Activated CD8-positive, alpha-beta T cell treated with anti-CD3 and anti-CD28 coated beads, Interleukin-2, amount 10 ng/mL, durations not matched to agents 7 days and 5 days (primary cell): ENCODE measurements at regions of chr19 and their contacts with region 1.

Region 1: GRCh38 chr19:11435058-11435832 is at the starts of genes ODAD3 and PRKCSH:
- DNase-seq: peak; percentile 100
- ATAC-seq: peak; percentile 96
- H3K4me3 Mint-ChIP-seq: peak within 1 kb of the TSS; percentile 100
- H3K27ac Mint-ChIP-seq: peak within 1 kb of the TSS; percentile 100
- H3K4me1 Mint-ChIP-seq: peaks cover 19% of the 10 kb centered on the region
- H3K27me3 Mint-ChIP-seq: peaks cover 6% of the 10 kb centered on the region
- total RNA-seq, gene ODAD3: not detected
- total RNA-seq, gene PRKCSH: 285 to 302 TPM

Region 2: GRCh38 chr19:11422163-11423021 is 12.9 kb before region 1 on chr19:
- CTCF ChIA-PET with region 1: interaction called, 10 read pairs
- POLR2A ChIA-PET with region 1: interaction called, 3 read pairs
- DNase-seq: peak; percentile 88
- ATAC-seq: peak; percentile 74
- H3K4me3 Mint-ChIP-seq: peak overlapping the region; percentile 45
- H3K27ac Mint-ChIP-seq: no peak overlapping the region
- H3K4me1 Mint-ChIP-seq: peaks cover 36% of the 10 kb centered on the region
- H3K27me3 Mint-ChIP-seq: peaks cover 58% of the 10 kb centered on the region

Region 3: DNA sequence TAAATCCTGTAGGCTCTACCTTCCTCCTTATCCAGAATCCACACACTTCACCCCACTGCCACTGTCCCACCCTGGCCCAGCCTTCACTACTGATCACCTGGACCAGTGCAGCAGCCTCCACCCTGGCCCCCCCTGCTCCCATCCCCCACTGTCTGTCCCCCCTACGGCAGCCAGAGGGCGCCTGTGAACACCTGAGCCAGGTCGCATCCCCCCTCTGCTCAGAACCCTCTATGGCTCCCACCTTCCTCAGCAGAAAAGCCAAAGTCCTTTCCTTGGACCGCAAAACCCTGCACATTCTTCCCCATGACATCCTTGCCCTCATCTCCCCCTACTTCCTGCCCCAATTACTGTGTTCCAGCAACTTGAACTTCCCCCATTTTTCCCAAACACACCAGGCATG is 25.0 kb after region 1 on chr19:
- CTCF ChIA-PET with region 1: no interaction called
- POLR2A ChIA-PET with region 1: no interaction called
- DNase-seq: no peak
- ATAC-seq: no peak
- H3K4me3 Mint-ChIP-seq: no peak overlapping the region
- H3K27ac Mint-ChIP-seq: no peak overlapping the region
- H3K4me1 Mint-ChIP-seq: no peaks in the 10 kb centered on the region
- H3K27me3 Mint-ChIP-seq: peaks cover 10% of the 10 kb centered on the region